ENCODE measurements at regions of chr10 and their contacts with region 1.

Region 1: DNA sequence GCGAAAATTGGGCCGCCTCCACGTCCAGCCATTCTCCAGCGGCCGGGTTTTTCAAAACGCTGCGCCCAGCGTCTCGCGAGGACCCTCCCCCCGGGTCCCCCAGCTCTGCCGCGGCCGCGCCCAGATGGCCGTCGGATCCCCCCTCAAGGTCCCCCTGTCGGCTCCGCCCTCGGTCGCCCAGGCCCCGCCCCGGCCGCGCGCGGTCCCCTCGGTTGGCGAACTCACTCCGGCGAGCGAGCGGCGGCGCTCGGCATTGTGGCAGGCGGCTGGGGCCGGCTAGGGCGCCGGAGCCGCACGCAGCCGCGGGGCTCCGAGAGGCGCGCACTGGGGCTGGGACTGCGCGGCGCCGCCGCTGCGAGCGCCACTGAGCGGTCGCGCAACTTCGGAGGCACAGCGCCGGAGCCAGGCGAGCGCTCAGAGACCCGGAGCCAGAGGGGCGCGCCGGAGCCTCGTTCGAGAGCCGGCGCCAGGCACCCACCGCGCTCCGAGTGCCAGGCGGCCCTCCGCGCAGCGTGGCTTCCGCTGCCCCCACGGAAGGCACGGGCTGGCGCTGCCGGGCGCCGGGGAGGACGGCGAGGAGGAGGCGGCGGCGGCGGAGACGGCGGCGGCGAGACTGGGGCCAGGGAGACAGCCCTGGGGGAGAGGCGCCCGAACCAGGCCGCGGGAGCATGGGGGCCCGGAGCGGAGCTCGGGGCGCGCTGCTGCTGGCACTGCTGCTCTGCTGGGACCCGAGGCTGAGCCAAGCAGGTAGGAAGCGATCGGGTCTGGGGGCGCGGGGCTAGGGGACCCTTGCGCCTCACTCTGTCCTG is at the start of gene UNC5B:
- DNase-seq: peak; percentile 85
- ATAC-seq: peak; percentile 94
- H3K4me3 ChIP-seq: peak within 1 kb of the TSS; percentile 63
- H3K27ac ChIP-seq: peak within 1 kb of the TSS; percentile 11; the same call in 1 of the 2 replicates
- H3K4me1 ChIP-seq: peaks cover 9% of the 10 kb centered on the region
- H3K27me3 ChIP-seq: peaks cover 26% of the 10 kb centered on the region
- CTCF ChIP-seq: peak; percentile 45
- POLR2A ChIP-seq: peak; percentile 88
- RAD21 ChIP-seq: peak; percentile 24
- total RNA-seq, gene UNC5B: 1.4 and 1.6 TPM in 2 replicates

Region 2: GRCh38 chr10:70815504-70816219 is 396.9 kb before region 1 on chr10 and contains the start of gene SGPL1:
- CTCF ChIA-PET with region 1: no interaction called
- POLR2A ChIA-PET with region 1: no interaction called
- dilution Hi-C with region 1: no loop called
- in situ Hi-C with region 1: no loop called
- intact Hi-C with region 1: loop called (anchors 10 kb)
- DNase-seq: peak; percentile 71
- ATAC-seq: peak; percentile 88
- H3K4me3 ChIP-seq: peak within 1 kb of the TSS; percentile 86
- H3K27ac ChIP-seq: peak within 1 kb of the TSS; percentile 87
- H3K4me1 ChIP-seq: no peaks in the 10 kb centered on the region
- H3K27me3 ChIP-seq: peaks cover 7% of the 10 kb centered on the region; the same call in 1 of the 2 replicates
- CTCF ChIP-seq: peak; percentile 99
- POLR2A ChIP-seq: peak; percentile 45; the same call in 1 of the 2 replicates
- RAD21 ChIP-seq: peak; percentile 97
- total RNA-seq, gene SGPL1: 26.7 and 27.5 TPM in 2 replicates

Region 3: DNA sequence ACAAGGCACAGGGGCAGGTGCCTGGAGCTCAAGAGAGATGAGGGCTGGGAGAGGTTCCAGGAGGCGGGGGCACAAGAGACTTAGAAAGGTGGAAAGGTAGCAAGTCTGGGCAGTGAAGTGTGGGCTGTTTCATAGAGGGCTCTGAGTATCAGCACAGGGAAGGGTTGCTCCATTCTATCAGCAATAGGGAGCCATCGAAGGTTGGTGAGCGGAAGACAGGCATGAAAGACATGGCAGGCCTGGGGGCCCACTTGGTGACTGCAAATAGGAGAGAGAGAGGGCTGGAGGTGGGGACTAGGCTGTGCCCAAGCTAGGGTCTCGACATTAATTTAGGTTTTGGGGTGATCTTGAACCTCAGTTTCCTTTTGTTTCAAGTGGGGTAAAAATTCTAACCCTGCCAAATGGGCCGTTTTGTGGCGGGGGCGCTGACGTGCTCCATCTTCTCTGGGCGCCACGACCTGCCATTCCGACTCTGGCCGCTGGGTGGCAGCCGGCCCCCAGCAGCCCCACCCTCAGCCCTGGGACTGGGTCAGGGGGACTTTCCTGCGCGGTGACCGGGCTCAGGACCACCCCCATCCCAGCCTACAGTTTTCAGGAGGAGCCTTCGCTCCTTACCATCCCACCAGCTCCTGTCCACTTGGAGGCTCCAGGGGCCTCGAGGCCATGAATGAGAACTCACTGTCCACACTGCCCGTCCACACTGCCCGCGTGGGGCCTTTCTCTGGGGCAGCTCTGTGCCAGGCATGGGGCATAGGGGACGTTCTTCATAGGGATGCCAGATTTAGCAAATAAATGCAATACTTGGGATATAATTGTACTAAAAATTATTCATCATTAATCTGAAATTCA is 286.9 kb before region 1 on chr10:
- CTCF ChIA-PET with region 1: interaction called, 6 read pairs
- POLR2A ChIA-PET with region 1: no interaction called
- dilution Hi-C with region 1: no loop called
- in situ Hi-C with region 1: no loop called
- intact Hi-C with region 1: loop called (anchors 1 kb)
- DNase-seq: no peak
- ATAC-seq: peak; percentile 98
- H3K4me3 ChIP-seq: no peak overlapping the region
- H3K27ac ChIP-seq: no peak overlapping the region
- H3K4me1 ChIP-seq: no peaks in the 10 kb centered on the region
- H3K27me3 ChIP-seq: peaks cover 52% of the 10 kb centered on the region
- CTCF ChIP-seq: peak; percentile 77
- POLR2A ChIP-seq: no peak
- RAD21 ChIP-seq: peak; percentile 79

Region 4: GRCh38 chr10:71260622-71261325 is 48.3 kb after region 1 on chr10:
- CTCF ChIA-PET with region 1: interaction called, 3 read pairs
- POLR2A ChIA-PET with region 1: no interaction called
- dilution Hi-C with region 1: no loop called
- in situ Hi-C with region 1: loop called (anchors 5 kb)
- intact Hi-C with region 1: loop called (anchors 2 kb)
- DNase-seq: peak; percentile 96
- ATAC-seq: peak; percentile 83
- H3K4me3 ChIP-seq: no peak overlapping the region
- H3K27ac ChIP-seq: peak overlapping the region; percentile 77
- H3K4me1 ChIP-seq: peaks cover 26% of the 10 kb centered on the region
- H3K27me3 ChIP-seq: no peaks in the 10 kb centered on the region
- CTCF ChIP-seq: 0 out of 2 replicates have a peak, but pooled peaks have one; percentile 24
- POLR2A ChIP-seq: peak; percentile 54; the same call in 1 of the 2 replicates
- RAD21 ChIP-seq: peak; percentile 47

Region 5: DNA sequence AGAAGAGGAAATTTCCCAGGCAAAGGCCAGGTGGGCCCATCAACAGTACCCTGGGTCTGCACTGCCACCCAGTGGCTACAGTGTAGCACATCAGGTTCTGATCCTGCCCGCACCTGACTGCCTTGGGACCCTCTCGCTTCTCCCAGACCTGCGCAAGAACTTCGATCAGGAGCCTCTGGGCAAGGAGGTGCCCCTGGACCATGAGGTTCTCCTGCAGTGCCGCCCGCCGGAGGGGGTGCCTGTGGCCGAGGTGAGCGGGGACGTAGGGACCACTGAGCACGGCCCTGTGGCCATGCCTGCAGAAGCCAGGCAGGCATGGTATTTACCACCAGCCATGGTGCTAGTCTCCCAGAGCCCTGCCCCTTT is 72.6 kb after region 1 on chr10:
- CTCF ChIA-PET with region 1: no interaction called
- POLR2A ChIA-PET with region 1: no interaction called
- dilution Hi-C with region 1: no loop called
- in situ Hi-C with region 1: no loop called
- intact Hi-C with region 1: loop called (anchors 2 kb)
- DNase-seq: peak; percentile 29
- ATAC-seq: peak; percentile 92
- H3K4me3 ChIP-seq: no peak overlapping the region
- H3K27ac ChIP-seq: no peak overlapping the region
- H3K4me1 ChIP-seq: peaks cover 4% of the 10 kb centered on the region; the same call in 1 of the 2 replicates
- H3K27me3 ChIP-seq: no peaks in the 10 kb centered on the region
- CTCF ChIP-seq: peak; percentile 73
- POLR2A ChIP-seq: no peak
- RAD21 ChIP-seq: peak; percentile 88

Region 6: DNA sequence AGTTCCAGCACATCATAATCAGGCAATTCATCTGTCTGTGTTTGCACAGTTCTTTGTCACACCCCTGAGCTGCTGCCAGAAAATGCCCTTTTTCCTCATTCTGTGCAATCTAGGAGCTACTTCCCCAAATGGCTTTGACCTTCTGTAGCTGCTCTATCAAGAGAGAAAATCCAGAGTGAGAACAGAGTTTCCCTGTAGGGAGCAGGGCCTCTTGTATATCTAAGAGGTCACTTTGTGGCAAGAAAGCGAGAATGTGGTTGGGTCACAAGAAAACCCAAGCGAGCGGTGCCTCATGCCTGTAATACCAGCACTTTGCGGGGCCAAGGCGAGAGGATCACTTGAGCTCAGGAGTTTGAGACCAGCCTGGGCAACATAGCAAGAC is 130.9 kb after region 1 on chr10:
- CTCF ChIA-PET with region 1: no interaction called
- POLR2A ChIA-PET with region 1: no interaction called
- dilution Hi-C with region 1: no loop called
- in situ Hi-C with region 1: no loop called
- intact Hi-C with region 1: no loop called
- DNase-seq: peak; percentile 44
- ATAC-seq: peak; percentile 66
- H3K4me3 ChIP-seq: no peak overlapping the region
- H3K27ac ChIP-seq: no peak overlapping the region
- H3K4me1 ChIP-seq: peaks cover 6% of the 10 kb centered on the region; the same call in 1 of the 2 replicates
- H3K27me3 ChIP-seq: peaks cover 15% of the 10 kb centered on the region; the same call in 1 of the 2 replicates
- CTCF ChIP-seq: no peak
- POLR2A ChIP-seq: no peak
- RAD21 ChIP-seq: no peak

Region 7: DNA sequence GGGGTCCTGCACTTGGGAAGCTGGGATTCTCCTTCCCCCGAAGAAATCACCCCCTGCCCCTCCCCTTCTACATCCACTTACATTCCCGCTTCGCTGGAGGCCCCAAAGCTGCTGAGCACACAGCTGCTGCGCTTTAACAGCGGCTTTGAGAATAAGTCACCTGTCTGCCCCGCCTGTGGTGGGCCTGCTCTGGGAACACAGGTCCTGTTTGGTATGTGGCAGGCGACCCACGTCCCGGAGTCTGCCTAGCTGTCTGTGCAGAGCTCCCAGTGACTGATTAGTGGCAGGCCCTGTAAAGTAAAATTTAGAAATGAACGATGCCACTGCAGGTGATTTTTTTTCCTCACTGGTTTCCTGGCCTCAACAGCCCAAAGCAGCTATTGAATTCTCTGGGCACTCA is 231.2 kb after region 1 on chr10:
- CTCF ChIA-PET with region 1: no interaction called
- POLR2A ChIA-PET with region 1: no interaction called
- dilution Hi-C with region 1: no loop called
- in situ Hi-C with region 1: no loop called
- intact Hi-C with region 1: no loop called
- DNase-seq: no peak
- ATAC-seq: no peak
- H3K4me3 ChIP-seq: no peak overlapping the region
- H3K27ac ChIP-seq: no peak overlapping the region
- H3K4me1 ChIP-seq: no peaks in the 10 kb centered on the region
- H3K27me3 ChIP-seq: peaks cover 28% of the 10 kb centered on the region
- CTCF ChIP-seq: no peak
- POLR2A ChIP-seq: no peak
- RAD21 ChIP-seq: no peak

Measured in IMR-90 (cell line).